Mammary epithelial cell (primary cell): ENCODE measurements at regions of chr1 and their contacts with region 1.

Region 1: GRCh38 chr1:2229037-2229864 is 1.1 kb downstream of the SKI start:
- DNase-seq: peak; percentile 53
- H3K4me3 ChIP-seq: peak overlapping the region; percentile 57 to 81 (median 68)
- H3K27ac ChIP-seq: peak overlapping the region; percentile 61
- H3K4me1 ChIP-seq: peaks cover 39% of the 10 kb centered on the region
- H3K27me3 ChIP-seq: no peaks in the 10 kb centered on the region
- CTCF ChIP-seq: no peak

Region 2: GRCh38 chr1:2174348-2175054 is 54.8 kb before region 1 on chr1:
- CTCF ChIA-PET with region 1: no interaction called
- dilution Hi-C with region 1: no loop called
- in situ Hi-C with region 1: no loop called
- intact Hi-C with region 1: no loop called
- DNase-seq: peak; percentile 40
- H3K4me3 ChIP-seq: no peak overlapping the region
- H3K27ac ChIP-seq: no peak overlapping the region
- H3K4me1 ChIP-seq: peaks cover 4% of the 10 kb centered on the region
- H3K27me3 ChIP-seq: no peaks in the 10 kb centered on the region
- CTCF ChIP-seq: peak; percentile 89 to 94

Region 3: GRCh38 chr1:2255420-2256369 is 26.4 kb after region 1 on chr1:
- CTCF ChIA-PET with region 1: no interaction called
- dilution Hi-C with region 1: no loop called
- in situ Hi-C with region 1: no loop called
- intact Hi-C with region 1: no loop called
- DNase-seq: peak; percentile 67
- H3K4me3 ChIP-seq: no peak overlapping the region
- H3K27ac ChIP-seq: peak overlapping the region; percentile 60
- H3K4me1 ChIP-seq: peaks cover 20% of the 10 kb centered on the region
- H3K27me3 ChIP-seq: no peaks in the 10 kb centered on the region
- CTCF ChIP-seq: no peak

Region 4: DNA sequence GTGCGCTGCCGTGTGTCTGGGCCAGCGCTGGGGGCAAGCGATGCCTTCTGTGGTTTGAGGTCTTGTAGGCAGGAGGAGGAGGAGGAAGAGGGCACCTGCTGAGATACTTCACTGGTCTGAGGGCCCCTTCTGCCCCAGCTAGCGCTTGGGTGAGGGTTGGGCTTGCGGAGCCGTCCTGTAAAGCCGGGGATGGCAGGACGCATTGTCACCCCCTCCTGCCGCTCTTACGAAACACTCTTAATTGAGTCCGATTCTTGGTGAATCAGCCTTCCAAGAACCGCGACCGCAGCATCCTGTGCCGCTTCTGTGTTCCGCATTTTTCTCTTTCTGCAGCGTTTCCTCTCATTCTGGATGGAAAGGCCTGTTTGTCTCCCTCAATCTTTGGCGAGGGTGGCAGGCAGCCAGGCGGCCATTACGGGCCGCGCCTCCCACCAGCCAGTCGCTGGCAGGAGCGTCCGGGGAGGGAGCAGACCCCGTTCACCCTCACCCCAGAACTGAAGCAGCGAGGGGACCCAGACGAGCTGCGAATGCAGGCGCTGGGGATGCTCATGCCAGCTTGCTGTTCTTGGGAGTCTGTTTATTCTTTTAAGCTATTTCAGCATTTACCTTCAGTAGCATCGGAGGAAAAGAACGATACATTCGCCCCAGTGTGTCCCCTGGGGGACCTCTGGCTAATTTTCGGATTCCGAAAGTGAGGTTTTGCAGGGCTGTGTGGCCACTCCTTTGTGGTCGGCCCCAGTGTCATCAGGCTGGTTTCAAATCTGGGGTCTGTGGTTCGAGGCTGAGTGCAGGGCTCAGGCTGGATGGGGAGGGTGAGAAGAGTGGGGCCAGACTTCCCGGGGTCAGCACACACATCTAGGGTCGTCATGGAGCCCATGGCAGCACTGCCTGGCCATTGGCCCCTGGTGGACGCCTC is 61.6 kb after region 1 on chr1:
- CTCF ChIA-PET with region 1: no interaction called
- dilution Hi-C with region 1: no loop called
- in situ Hi-C with region 1: no loop called
- intact Hi-C with region 1: loop called (anchors 1 kb)
- DNase-seq: peak; percentile 94
- H3K4me3 ChIP-seq: peak overlapping the region in 2 of 3 experiments; percentile 18 to 31
- H3K27ac ChIP-seq: peak overlapping the region; percentile 57
- H3K4me1 ChIP-seq: peaks cover 32% of the 10 kb centered on the region
- H3K27me3 ChIP-seq: no peaks in the 10 kb centered on the region
- CTCF ChIP-seq: no peak

Region 5: GRCh38 chr1:2314803-2315673 is 85.8 kb after region 1 on chr1:
- CTCF ChIA-PET with region 1: no interaction called
- dilution Hi-C with region 1: no loop called
- in situ Hi-C with region 1: no loop called
- intact Hi-C with region 1: loop called (anchors 5 kb)
- DNase-seq: no peak
- H3K4me3 ChIP-seq: peak overlapping the region in 2 of 3 experiments; percentile 38 to 49
- H3K27ac ChIP-seq: no peak overlapping the region
- H3K4me1 ChIP-seq: peaks cover 15% of the 10 kb centered on the region
- H3K27me3 ChIP-seq: no peaks in the 10 kb centered on the region
- CTCF ChIP-seq: peak; percentile 21 to 58